ENCODE measurements at regions of chr14 and their contacts with region 1.

Region 1: GRCh38 chr14:58427281-58428117 is at the starts of genes KIAA0586 and TIMM9:
- DNase-seq: peak; percentile 98
- H3K4me3 Mint-ChIP-seq: peak within 1 kb of the TSS; percentile 88
- H3K27ac Mint-ChIP-seq: peak within 1 kb of the TSS; percentile 99
- H3K4me1 Mint-ChIP-seq: peaks cover 48% of the 10 kb centered on the region
- H3K27me3 Mint-ChIP-seq: no peaks in the 10 kb centered on the region
- total RNA-seq, gene KIAA0586: 40.4 to 41.8 TPM
- total RNA-seq, gene TIMM9: 60.7 to 64.4 TPM

Region 2: DNA sequence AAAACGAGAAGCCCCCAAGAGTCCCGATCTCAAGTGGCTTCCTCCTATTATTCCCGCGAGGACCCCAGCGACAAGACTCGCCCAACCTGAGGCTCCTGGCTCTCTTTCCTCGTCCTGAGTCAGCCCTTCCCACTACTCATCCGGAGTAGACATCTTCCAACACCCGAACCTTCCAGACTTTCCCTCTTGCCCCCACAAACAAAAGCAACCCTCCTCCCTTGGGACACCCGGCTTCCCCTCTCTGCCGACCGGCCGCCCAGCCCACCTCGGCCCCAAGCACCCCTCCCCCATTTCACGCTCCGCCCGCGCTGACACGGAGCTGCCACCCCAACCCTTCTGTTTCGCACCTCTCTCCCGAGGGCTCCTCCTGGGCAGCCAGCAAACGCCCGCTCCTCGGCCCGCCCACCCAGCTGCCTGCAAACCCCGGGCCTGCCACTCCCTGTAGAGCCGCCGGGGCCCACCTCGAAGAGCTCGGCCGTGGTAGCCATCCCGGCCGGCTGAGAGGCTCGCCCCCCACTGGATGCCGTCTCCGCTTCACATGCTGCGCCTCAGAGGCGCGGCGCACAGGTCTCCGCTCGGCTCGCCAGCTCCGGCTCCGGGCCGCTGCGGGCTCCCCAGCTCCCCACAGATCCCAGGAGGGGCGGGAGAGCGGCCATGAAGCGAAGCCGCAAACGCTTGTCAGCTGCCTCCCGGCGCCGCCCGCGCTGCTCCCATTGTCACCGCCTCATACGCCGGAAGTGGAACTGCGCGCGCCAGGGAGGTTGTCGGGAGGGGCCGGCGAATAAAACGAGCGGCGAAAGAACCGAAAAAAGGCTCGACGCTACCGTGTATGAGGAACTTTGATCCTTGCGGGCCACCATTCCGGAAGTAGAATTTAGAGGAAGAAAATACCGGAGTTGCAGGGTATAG is 1159.1 kb before region 1 on chr14 and contains the starts of genes AP5M1 and EXOC5:
- CTCF ChIA-PET with region 1: no interaction called
- intact Hi-C with region 1: loop called (anchors 2 kb)
- DNase-seq: peak; percentile 95
- H3K4me3 Mint-ChIP-seq: peak within 1 kb of the TSS; percentile 99
- H3K27ac Mint-ChIP-seq: peak within 1 kb of the TSS; percentile 99
- H3K4me1 Mint-ChIP-seq: peaks cover 57% of the 10 kb centered on the region
- H3K27me3 Mint-ChIP-seq: no peaks in the 10 kb centered on the region
- total RNA-seq, gene AP5M1: 22.8 to 23.3 TPM
- total RNA-seq, gene EXOC5: 65.0 to 68.1 TPM

Region 3: GRCh38 chr14:58199726-58200479 is 227.6 kb before region 1 on chr14 and contains the start of gene ACTR10:
- CTCF ChIA-PET with region 1: no interaction called
- intact Hi-C with region 1: loop called (anchors 1 kb)
- DNase-seq: peak; percentile 89
- H3K4me3 Mint-ChIP-seq: peak within 1 kb of the TSS; percentile 93
- H3K27ac Mint-ChIP-seq: peak within 1 kb of the TSS; percentile 87
- H3K4me1 Mint-ChIP-seq: peaks cover 39% of the 10 kb centered on the region
- H3K27me3 Mint-ChIP-seq: no peaks in the 10 kb centered on the region
- total RNA-seq, gene ACTR10: 29.5 to 29.7 TPM

Region 4: DNA sequence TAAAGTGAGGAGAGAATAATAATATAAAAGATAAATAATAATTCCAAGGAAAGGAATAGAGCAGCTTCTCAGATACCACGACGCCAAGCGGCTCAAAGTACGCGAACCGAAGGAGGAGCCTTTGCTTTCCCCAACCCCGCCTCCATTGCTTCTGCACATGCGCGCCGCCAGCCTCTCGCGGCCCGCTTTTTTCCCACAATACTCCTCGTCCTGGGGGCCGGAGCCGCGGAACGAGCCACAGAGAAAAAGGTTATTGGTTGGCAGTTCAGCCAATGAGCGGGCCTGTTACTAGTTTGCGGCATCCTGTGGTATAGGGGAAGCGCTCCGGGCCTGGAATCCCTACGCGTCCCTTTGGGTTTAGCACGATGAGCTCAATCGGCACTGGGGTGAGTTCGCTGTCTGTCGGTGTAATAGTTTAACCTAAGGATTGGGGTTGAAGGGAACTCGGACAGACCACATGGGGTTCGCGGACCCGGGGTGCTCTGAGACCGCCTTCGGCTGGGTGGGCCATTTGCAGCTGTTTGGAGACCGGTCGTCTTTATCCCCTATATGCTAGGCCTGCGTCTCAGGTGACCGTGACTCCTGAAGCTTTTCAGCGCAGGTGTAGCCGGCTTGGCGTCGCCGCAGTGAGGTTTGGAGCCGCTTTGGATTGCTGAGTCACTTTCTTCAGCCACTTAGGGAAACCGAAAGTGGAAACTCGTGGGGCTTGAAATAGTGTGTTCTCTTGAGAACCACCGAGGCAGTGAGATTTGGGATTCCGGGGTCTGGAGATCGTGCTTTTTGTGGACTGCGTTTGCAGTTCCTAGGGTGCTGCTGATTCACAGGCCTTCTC is 182.7 kb before region 1 on chr14 and contains the start of gene PSMA3:
- CTCF ChIA-PET with region 1: no interaction called
- intact Hi-C with region 1: loop called (anchors 1 kb)
- DNase-seq: peak; percentile 99
- H3K4me3 Mint-ChIP-seq: peak within 1 kb of the TSS; percentile 98
- H3K27ac Mint-ChIP-seq: peak within 1 kb of the TSS; percentile 99
- H3K4me1 Mint-ChIP-seq: peaks cover 43% of the 10 kb centered on the region
- H3K27me3 Mint-ChIP-seq: no peaks in the 10 kb centered on the region
- total RNA-seq, gene PSMA3: 399 to 424 TPM

Region 5: DNA sequence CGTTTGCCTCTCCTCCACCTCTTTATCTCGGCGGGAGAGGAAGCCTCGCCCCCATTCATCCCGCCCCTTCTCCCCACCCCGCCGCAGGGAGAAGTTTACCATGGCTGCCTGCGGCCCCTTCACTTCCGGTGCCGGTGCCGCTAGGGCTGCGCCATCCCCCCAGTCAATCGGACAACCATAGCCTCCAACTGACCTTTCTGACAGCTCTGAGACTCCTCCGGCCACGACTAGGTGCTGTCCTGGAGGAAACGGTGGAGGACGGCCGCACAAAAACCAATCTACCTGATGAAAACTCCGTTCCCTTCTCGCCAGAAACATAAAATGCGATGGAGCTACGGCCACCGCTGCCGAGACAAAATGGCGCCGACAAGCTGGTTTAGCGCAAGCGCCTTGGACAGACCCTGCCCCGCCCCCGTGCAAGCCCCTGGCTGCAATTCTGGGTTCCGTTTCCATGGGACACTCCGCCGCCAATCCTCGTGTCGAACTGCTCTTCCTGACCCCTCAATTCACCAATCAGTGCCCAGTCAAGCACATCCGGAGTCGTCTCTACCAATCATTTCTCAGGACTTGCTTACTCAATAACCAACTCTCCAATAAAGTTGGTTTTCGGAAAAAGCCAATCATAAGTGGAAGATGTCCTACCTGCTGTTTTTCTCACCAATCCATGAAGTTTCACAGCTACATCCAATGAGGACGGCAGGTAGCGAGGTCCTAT is 129.6 kb before region 1 on chr14:
- CTCF ChIA-PET with region 1: no interaction called
- intact Hi-C with region 1: loop called (anchors 1 kb)
- DNase-seq: peak; percentile 99
- H3K4me3 Mint-ChIP-seq: no peak overlapping the region
- H3K27ac Mint-ChIP-seq: no peak overlapping the region
- H3K4me1 Mint-ChIP-seq: peaks cover 43% of the 10 kb centered on the region
- H3K27me3 Mint-ChIP-seq: no peaks in the 10 kb centered on the region

Region 6: DNA sequence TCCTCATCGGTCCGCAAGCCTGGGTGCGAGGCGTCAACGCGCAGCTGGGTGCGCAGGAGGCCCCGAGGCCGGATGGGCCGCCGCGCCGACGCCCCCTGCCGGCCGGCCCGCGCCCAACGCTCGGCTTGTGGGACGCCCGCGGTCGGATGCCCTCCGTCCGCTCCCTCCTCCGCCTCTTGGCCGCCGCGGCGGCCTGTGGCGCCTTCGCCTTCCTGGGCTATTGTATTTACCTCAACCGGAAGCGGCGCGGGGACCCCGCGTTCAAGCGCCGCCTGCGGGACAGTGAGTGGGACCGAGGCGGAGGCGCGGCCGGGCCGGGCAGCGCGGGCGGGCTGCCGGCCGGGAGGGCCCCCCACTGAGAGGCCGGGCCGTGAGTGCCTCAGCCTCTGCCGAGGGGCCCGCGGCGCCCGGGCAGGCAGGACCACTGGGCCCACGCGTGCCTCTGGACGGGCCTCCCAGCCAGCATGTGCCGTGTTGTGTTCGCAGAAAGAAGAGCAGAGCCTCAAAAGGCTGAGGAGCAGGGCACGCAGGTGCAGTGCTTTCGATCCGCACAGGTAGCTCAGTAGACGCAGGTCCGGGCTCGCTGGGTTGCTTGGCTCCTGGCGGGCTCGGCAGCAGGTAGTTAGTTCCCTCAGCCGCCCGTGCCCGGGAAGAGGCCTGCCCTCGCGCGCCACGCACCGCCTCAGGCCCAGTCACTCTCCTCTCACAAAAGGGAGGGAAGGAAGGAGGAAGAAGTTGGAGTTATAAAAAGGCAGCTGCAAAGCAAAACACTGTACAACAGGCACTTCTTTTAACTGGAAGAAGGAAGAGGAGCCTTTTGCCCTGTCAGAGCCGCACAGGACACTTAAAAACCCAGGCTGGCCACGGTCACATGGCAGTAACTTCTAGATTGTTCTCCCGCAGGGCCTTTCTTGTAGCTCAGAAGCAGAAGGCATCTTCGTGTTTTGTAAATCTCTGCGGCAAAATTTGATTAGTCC is 31.4 kb before region 1 on chr14 and contains the start of gene TOMM20L:
- CTCF ChIA-PET with region 1: interaction called, 10 read pairs
- intact Hi-C with region 1: loop called (anchors 1 kb)
- DNase-seq: peak; percentile 71
- H3K4me3 Mint-ChIP-seq: peak within 1 kb of the TSS; percentile 67
- H3K27ac Mint-ChIP-seq: no peak within 1 kb of the TSS
- H3K4me1 Mint-ChIP-seq: peaks cover 8% of the 10 kb centered on the region
- H3K27me3 Mint-ChIP-seq: no peaks in the 10 kb centered on the region
- total RNA-seq, gene TOMM20L: not detected

Region 7: GRCh38 chr14:59189786-59190771 is 762.6 kb after region 1 on chr14:
- CTCF ChIA-PET with region 1: no interaction called
- intact Hi-C with region 1: loop called (anchors 1 kb)
- DNase-seq: peak; percentile 77
- H3K4me3 Mint-ChIP-seq: peak overlapping the region; percentile 91
- H3K27ac Mint-ChIP-seq: no peak overlapping the region
- H3K4me1 Mint-ChIP-seq: peaks cover 13% of the 10 kb centered on the region
- H3K27me3 Mint-ChIP-seq: no peaks in the 10 kb centered on the region

Measured in activated naive CD4-positive, alpha-beta T cell treated with anti-CD3 and anti-CD28 coated beads for 36 hours (primary cell).